ENCODE measurements at regions of chr1 and their contacts with region 1.

Region 1: DNA sequence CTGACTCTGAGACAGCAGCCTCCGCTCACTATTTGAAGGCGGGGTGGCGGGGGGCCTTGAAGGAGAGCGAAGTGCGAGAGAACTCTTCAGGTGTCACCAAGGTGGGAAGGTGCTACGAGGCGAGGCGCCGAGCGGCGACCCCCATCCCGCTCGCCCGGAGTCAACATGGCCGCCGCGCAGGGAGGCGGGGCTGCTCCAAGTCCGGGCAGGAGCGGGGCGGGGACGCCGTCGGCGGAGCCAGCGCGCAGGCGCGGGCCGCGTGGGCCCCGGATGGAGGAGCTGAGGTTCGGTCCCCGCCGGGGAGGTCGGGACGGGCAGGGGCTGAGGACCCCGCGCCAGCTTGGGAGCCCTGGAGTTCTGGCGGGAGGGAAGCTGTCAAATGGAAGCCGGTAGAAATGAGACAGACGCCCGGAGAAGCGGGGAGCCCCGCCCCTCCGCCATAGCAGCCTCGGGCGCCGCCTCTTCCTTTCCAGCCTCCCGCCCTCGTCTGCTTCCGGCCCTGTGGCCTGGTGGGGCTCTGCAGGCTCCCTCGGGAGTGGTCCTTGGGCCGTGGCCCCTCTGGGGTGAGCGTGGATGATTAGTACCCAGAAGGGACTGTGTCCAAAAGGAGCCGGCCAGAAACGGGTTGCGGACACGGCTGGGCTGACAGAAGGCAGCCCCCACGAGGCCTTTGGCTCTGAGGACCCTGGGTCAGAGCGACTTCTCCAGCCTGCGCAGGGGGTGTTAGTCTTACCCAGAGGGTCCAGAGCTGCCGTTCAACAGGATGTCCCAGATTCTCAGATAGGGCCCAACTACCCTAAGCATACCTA is at the start of gene PIGV:
- DNase-seq: peak; percentile 79
- H3K4me3 ChIP-seq: peak within 1 kb of the TSS; percentile 70 to 77
- H3K27ac ChIP-seq: peak within 1 kb of the TSS; percentile 99
- H3K4me1 ChIP-seq: peaks cover 12% of the 10 kb centered on the region
- H3K27me3 ChIP-seq: no peaks in the 10 kb centered on the region
- CTCF ChIP-seq: peak; percentile 20 to 62 (median 38)
- POLR2A ChIP-seq: peak; percentile 69
- total RNA-seq, gene PIGV: 26.4 to 32.4 TPM

Region 2: DNA sequence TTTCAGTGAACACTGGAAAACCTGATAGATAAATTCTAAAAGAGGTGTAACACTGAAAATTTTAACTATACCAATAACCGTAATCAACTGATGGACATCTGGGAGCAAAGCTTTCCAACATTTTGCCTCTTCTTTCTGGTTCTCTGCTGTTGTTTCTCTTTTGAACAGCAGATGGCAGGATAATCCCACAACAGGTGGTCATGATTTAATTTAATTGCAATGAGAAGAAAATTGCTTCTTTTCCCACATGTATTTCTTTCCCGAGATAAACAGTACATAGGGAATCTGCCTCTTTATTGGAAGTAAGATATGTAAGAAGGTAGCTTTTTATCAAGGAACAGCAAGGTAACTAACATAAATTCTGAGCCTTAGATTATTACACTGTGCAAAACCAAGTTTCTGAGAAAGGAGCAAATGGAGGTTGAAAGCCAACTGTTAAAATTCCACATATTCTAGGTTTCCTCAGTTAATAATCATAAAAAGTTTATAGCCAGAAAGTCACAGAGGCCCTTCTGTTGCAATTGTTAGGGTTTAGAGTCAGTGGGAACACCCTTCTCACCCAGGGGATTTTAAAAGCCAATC is 185.4 kb before region 1 on chr1:
- intact Hi-C with region 1: loop called (anchors 1 kb)
- DNase-seq: peak; percentile 62
- H3K4me3 ChIP-seq: no peak overlapping the region
- H3K27ac ChIP-seq: no peak overlapping the region
- H3K4me1 ChIP-seq: peaks cover 2% of the 10 kb centered on the region
- H3K27me3 ChIP-seq: no peaks in the 10 kb centered on the region
- CTCF ChIP-seq: peak; percentile 71 to 97 (median 91)
- POLR2A ChIP-seq: no peak

Region 3: GRCh38 chr1:26677306-26678115 is 110.4 kb before region 1 on chr1:
- intact Hi-C with region 1: loop called (anchors 1 kb)
- DNase-seq: peak; percentile 92
- H3K4me3 ChIP-seq: no peak overlapping the region
- H3K27ac ChIP-seq: peak overlapping the region; percentile 18 to 46
- H3K4me1 ChIP-seq: no peaks in the 10 kb centered on the region
- H3K27me3 ChIP-seq: no peaks in the 10 kb centered on the region
- CTCF ChIP-seq: peak; percentile 62 to 93 (median 82)
- POLR2A ChIP-seq: no peak

Region 4: DNA sequence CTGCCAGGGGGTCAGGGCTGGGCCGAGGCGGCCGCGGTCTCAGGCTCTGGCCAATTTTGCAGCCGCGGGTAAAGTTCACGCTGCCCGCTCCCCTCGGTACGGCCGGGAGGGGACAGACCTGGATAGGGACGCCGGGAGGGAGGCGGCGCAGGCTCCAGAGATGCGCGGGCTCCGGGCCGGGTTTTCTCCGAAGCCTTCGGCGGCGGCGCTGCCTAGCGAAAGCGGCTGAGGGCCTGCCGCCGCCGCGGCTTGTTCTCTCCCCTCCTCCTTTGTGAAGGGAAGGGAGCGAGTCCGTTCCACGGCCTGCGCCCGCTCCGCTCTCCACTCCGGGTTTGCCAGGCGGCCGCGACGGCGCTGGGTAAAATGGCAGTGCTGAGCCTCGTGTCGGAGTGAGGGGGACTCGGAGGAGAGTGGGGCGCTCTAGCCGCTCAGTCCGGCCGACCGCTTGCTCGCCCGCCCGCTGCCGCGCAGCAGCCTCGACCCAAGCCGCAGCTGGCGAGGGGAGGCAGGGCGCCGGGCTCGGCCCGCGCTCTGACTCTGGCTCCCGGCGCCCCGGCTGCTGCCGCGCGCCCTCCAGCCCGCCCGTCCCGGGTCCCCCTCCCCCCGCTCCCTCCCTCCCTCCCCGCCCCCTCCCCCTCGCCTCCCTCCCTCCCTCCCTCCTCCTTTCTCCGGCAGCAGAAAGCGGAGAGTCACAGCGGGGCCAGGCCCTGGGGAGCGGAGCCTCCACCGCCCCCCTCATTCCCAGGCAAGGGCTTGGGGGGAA is 92.4 kb before region 1 on chr1 and contains the start of gene ARID1A:
- intact Hi-C with region 1: loop called (anchors 1 kb)
- DNase-seq: peak; percentile 92
- H3K4me3 ChIP-seq: peak within 1 kb of the TSS; percentile 89 to 95
- H3K27ac ChIP-seq: peak within 1 kb of the TSS; percentile 91 to 99
- H3K4me1 ChIP-seq: peaks cover 21% of the 10 kb centered on the region
- H3K27me3 ChIP-seq: no peaks in the 10 kb centered on the region
- CTCF ChIP-seq: peak in 2 of 4 experiments; percentile 28 to 44
- POLR2A ChIP-seq: peak; percentile 67
- total RNA-seq, gene ARID1A: 71.4 to 92.8 TPM

Region 5: GRCh38 chr1:27136998-27137542 is 349.2 kb after region 1 on chr1:
- intact Hi-C with region 1: no loop called
- DNase-seq: no peak
- H3K4me3 ChIP-seq: no peak overlapping the region
- H3K27ac ChIP-seq: no peak overlapping the region
- H3K4me1 ChIP-seq: peaks cover 3% of the 10 kb centered on the region
- H3K27me3 ChIP-seq: no peaks in the 10 kb centered on the region
- CTCF ChIP-seq: no peak
- POLR2A ChIP-seq: no peak

Measured in prostate gland (tissue), 2 donors.